Heart right ventricle (tissue), 16 donors: ENCODE measurements at regions of chr10 and their contacts with region 1.

Region 1: DNA sequence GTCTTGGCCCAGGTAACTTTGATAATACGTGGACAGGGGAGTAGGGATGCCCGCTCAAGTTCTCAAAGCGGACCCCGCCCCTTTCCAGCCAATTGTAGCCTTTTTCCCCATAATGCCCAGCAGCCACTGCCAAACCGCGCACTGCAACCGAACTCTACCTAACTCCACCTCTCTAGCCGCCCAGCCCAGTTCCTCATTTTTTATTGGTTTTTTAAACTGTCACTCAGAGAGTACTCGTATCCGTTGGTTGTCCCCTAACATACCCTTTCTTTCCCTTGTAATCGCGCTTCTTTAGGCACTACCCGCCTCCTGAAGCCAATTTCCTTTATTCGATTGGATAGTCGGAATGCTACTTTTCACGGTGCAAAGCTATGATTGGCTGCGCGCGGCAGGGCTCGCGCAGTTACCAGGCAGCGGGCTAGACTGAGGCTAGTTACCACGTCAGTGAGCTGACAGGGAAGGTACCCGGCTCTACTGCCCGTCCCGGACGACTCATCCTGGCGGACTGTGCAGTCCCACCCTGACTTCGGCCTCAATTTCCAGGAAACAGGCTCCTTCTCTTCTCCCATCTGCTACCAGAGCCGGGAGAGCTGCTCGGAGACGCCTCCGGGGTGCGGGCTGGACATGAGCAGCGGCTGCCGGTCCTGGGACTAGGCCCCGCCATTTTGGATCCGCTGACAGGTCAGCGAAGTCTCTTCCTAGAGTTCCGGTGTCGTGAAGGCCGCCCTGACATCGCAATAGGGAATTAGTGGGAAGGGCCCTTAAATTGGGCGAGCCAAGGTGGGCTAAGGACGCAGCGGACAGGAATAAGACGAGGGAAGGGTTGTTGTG is at the start of gene GBF1:
- DNase-seq: peak; percentile 88 to 95
- ATAC-seq: peak; percentile 91 to 95 (median 93)
- H3K4me3 ChIP-seq: peak within 1 kb of the TSS; percentile 71 to 97 (median 82)
- H3K27ac ChIP-seq: peak within 1 kb of the TSS; percentile 46 to 95 (median 89)
- H3K4me1 ChIP-seq: peaks cover 7 to 73% (median 60%) of the 10 kb centered on the region in 9 donors
- H3K27me3 ChIP-seq: peaks cover 0 to 23% (median 0%) of the 10 kb centered on the region in 7 donors
- CTCF ChIP-seq: no peak
- total RNA-seq, gene GBF1: 43.6 to 60.5 (median 50.7) TPM

Region 2: DNA sequence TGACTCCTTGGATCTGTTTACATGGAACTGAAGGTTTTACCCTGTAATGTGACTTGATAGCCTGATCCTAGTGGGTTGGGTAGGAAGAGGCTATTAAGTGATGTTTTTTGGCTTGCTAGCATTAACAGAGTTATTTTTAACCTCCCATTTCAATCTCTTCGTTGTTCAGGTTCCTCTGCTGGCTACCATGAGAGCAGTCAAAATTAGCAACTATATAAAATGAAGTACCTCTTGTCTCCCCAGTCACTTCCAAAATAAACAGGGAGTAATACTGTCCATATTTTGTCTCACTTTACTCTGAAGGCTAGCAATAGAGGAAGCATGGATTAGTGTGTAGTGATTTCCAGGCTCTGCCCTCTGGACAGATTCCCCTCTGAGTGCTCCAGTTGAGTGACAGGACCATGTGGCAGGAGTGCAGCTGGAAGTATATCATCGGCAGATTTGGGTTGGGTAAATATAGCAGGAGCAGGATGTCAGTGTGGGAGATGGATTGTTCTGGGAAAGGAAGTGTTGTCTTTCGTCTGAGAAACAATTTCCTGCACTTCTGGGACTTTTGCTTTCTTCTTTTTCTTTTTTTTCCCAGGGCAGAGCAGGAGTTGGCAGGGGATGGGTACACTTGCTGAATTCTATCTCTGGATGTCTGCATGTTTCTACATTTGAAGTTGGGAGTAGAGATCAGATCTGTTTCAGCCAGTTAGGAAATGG is 35.2 kb after region 1 on chr10:
- intact Hi-C with region 1: loop called in 1 of 10 experiments (anchors 2 kb)
- DNase-seq: peak in 1 of 2 donors; percentile 71
- ATAC-seq: peak; percentile 88 to 96 (median 93)
- H3K4me3 ChIP-seq: peak overlapping the region in 9 of 10 donors; percentile 4 to 42 (median 28)
- H3K27ac ChIP-seq: peak overlapping the region; percentile 46 to 88 (median 82)
- H3K4me1 ChIP-seq: peaks cover 8 to 75% (median 57%) of the 10 kb centered on the region in 9 donors
- H3K27me3 ChIP-seq: no peaks in the 10 kb centered on the region
- CTCF ChIP-seq: no peak